Natural killer cell (primary cell): ENCODE measurements at regions of chr20 and their contacts with region 1.

Region 1: DNA sequence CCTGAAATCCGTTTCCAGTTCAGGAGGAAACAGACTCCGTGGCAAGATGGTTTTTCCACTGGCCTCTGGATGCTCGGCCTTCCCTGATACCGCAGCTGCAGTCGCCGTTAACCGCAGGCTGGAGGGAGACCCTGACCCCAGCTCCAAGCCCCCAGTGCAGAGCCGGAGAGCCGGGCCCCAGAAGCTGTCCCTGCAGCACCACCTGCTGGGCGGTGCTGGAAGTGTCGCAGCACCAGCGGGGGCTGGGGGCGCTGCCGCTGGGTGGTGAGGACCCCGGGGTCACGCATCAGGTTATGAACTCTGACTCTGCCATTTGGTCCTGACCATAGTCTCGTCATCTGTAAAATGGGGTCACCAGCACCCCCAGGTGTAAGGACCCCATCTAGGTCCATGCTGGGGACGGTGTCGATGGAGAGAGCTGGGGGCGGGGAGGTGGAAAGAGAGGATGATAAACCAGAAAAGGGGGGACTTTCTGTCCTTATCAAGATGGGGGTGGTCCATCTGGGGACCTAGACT is 20.7 kb upstream of the CHRNA4 start:
- DNase-seq: peak; percentile 29 to 61
- ATAC-seq: peak in 1 of 3 donors; percentile 57
- H3K4me3 ChIP-seq: no peak overlapping the region
- H3K4me3 Mint-ChIP-seq: no peak overlapping the region
- H3K27ac ChIP-seq: no peak overlapping the region
- H3K27ac Mint-ChIP-seq: no peak overlapping the region
- H3K4me1 ChIP-seq: no peaks in the 10 kb centered on the region
- H3K4me1 Mint-ChIP-seq: no peaks in the 10 kb centered on the region
- H3K27me3 ChIP-seq: peaks cover 4% of the 10 kb centered on the region
- H3K27me3 Mint-ChIP-seq: peaks cover 4 to 7% of the 10 kb centered on the region in 2 donors
- CTCF ChIP-seq: peak; percentile 89

Region 2: DNA sequence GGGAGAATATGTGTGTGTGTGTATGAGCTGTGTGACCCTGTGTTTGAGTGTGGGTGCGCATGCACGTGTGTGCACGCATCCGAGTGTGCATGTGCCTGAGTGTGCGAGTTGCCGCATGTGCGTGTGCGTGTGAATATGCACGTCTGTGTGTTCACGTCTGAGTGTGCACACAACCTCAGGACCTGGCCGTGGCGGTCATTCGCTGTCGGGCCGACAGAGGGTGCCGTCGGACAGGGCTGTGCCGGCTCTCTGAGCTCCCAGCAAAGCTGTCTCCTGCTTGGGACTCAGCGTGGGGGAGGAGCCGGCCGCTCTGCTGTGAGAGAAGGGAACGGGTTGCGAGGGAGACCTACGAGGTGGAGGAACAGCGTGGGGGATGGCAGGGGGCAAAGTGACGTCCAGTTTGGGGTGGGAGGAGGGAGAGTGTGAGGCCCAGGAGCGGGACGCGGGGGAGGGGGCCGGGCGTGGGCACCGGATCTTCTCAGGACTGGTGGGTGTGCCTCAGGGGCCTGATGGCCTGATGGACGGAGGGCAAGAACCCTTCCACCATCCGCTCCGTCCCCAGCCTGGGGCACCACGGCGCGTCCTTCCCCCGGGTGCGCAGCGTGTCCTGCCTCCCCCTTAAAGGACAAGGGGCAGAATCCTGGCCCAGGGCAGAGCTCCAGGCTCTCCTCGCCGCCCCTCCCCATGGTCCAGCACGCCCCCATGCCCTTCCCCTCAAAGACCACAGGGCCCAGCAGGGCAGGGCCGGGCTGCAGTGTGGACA is 409.4 kb before region 1 on chr20:
- intact Hi-C with region 1: no loop called
- DNase-seq: peak; percentile 81 to 90
- ATAC-seq: peak; percentile 88 to 99 (median 98)
- H3K4me3 ChIP-seq: no peak overlapping the region
- H3K4me3 Mint-ChIP-seq: peak overlapping the region; percentile 56
- H3K27ac ChIP-seq: no peak overlapping the region
- H3K27ac Mint-ChIP-seq: peak overlapping the region in 1 of 2 donors; percentile 17
- H3K4me1 ChIP-seq: peaks cover 21% of the 10 kb centered on the region
- H3K4me1 Mint-ChIP-seq: peaks cover 10 to 20% of the 10 kb centered on the region in 2 donors
- H3K27me3 ChIP-seq: peaks cover 45% of the 10 kb centered on the region
- H3K27me3 Mint-ChIP-seq: peaks cover 24 to 38% of the 10 kb centered on the region in 2 donors
- CTCF ChIP-seq: peak; percentile 83

Region 3: GRCh38 chr20:63056236-63056948 is 325.5 kb before region 1 on chr20:
- intact Hi-C with region 1: loop called (anchors 5 kb)
- DNase-seq: peak; percentile 42 to 60
- ATAC-seq: peak; percentile 61 to 84 (median 80)
- H3K4me3 ChIP-seq: no peak overlapping the region
- H3K4me3 Mint-ChIP-seq: no peak overlapping the region
- H3K27ac ChIP-seq: no peak overlapping the region
- H3K27ac Mint-ChIP-seq: no peak overlapping the region
- H3K4me1 ChIP-seq: peaks cover 7% of the 10 kb centered on the region
- H3K4me1 Mint-ChIP-seq: no peaks in the 10 kb centered on the region
- H3K27me3 ChIP-seq: no peaks in the 10 kb centered on the region
- H3K27me3 Mint-ChIP-seq: peaks cover 0 to 10% of the 10 kb centered on the region in 2 donors
- CTCF ChIP-seq: peak; percentile 92

Region 4: GRCh38 chr20:63309261-63310071 is 72.4 kb before region 1 on chr20:
- intact Hi-C with region 1: loop called (anchors 2 kb)
- DNase-seq: peak in 1 of 2 donors; percentile 60
- ATAC-seq: peak in 2 of 3 donors; percentile 38 to 66
- H3K4me3 ChIP-seq: no peak overlapping the region
- H3K4me3 Mint-ChIP-seq: no peak overlapping the region
- H3K27ac ChIP-seq: no peak overlapping the region
- H3K27ac Mint-ChIP-seq: no peak overlapping the region
- H3K4me1 ChIP-seq: peaks cover 3% of the 10 kb centered on the region
- H3K4me1 Mint-ChIP-seq: no peaks in the 10 kb centered on the region
- H3K27me3 ChIP-seq: no peaks in the 10 kb centered on the region
- H3K27me3 Mint-ChIP-seq: peaks cover 0 to 6% of the 10 kb centered on the region in 2 donors
- CTCF ChIP-seq: peak; percentile 68

Region 5: DNA sequence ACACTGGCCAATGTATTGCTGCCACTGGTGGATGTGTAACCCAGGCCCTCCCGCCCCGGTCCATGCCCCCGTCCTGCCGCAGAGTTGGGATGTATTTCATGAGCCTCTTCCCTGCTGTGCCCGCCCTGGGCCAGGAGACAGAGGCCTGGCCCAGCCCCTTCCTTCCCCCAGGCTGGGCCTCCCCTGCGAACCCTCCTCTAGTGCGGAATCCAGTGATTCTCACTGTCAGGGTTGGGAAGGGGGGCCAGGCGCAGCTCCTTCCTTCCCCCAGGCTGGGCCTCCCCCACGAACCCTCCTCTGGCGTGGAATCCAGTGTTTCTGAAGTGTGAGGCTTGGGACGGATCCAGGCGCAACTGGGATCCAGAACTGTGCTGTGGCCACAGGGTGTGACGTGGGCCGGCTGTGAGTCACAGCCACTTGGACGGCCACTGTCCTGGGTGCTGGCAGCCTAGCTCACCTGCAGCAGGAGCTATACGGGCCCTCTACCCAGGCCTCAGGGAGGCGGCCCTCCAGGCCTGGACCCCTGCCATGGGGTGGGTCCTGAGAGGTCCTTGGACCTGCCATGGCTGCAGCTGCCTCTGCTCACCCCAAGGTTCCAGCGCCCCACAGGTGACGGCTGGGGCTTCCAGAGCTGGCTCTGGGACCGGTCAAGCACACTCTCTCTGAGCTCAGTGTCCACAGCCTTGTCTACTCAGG is 60.6 kb before region 1 on chr20:
- intact Hi-C with region 1: no loop called
- DNase-seq: no peak
- ATAC-seq: no peak
- H3K4me3 ChIP-seq: no peak overlapping the region
- H3K4me3 Mint-ChIP-seq: no peak overlapping the region
- H3K27ac ChIP-seq: no peak overlapping the region
- H3K27ac Mint-ChIP-seq: no peak overlapping the region
- H3K4me1 ChIP-seq: peaks cover 14% of the 10 kb centered on the region
- H3K4me1 Mint-ChIP-seq: no peaks in the 10 kb centered on the region
- H3K27me3 ChIP-seq: no peaks in the 10 kb centered on the region
- H3K27me3 Mint-ChIP-seq: peaks cover 6 to 16% of the 10 kb centered on the region in 2 donors
- CTCF ChIP-seq: no peak